B cell (primary cell): ENCODE measurements at regions of chr19 and their contacts with region 1.

Region 1: DNA sequence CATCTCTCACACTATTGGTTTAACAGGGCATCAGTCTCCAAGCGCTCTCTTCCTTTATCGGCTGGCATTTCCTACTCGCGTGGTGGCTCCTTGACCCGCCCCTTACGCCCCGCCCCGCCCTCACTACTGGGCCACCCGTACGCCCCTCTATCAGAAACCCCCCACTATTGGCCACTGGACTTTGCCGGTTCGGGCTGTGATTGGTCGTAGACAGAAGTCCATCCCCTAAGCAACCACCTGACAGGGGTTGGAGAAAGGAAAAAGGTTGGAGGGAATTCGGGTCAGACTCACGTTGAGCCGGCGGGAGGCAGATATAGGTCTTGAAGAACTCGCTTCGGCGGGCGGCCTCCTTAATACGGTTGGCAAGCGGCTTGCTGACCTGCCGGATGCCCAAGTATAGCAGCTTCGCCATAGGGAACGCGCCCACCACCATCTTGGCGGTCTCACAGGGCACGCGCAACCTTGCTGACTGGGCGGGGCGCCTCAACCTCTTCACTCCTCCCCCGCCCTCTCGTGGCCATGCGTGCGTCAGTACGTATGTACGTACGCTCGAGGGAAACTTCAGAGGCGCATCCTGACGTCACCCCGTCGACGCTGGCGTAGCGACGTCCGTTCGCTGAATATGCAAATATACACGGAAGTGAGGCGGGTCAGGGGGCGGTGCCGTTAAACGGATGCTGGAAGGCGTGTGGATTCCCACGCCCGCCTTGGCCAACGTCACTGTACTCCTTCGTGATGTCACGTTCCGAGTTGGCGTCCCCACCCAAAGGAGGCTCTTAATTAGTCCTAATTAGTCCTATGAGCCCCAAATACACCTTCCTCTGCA is at the start of gene OPA3:
- DNase-seq: peak; percentile 100
- ATAC-seq: peak; percentile 87
- H3K4me3 ChIP-seq: peak within 1 kb of the TSS; percentile 62 to 98 (median 82)
- H3K4me3 Mint-ChIP-seq: peak within 1 kb of the TSS; percentile 85
- H3K27ac ChIP-seq: peak within 1 kb of the TSS; percentile 97 to 98
- H3K27ac Mint-ChIP-seq: peak within 1 kb of the TSS; percentile 99
- H3K4me1 ChIP-seq: peaks cover 10 to 15% of the 10 kb centered on the region in 2 donors
- H3K4me1 Mint-ChIP-seq: peaks cover 21% of the 10 kb centered on the region
- H3K27me3 ChIP-seq: no peaks in the 10 kb centered on the region
- H3K27me3 Mint-ChIP-seq: peaks cover 5% of the 10 kb centered on the region
- CTCF ChIP-seq: no peak
- total RNA-seq, gene OPA3: 11.2 and 11.4 TPM in 2 replicates

Region 2: GRCh38 chr19:45496349-45496953 is 88.1 kb before region 1 on chr19:
- CTCF ChIA-PET with region 1: no interaction called
- POLR2A ChIA-PET with region 1: no interaction called
- intact Hi-C with region 1: loop called (anchors 1 kb)
- DNase-seq: peak; percentile 66
- ATAC-seq: peak; percentile 6
- H3K4me3 ChIP-seq: peak overlapping the region in 4 of 5 experiments; percentile 52 to 64 (median 60)
- H3K4me3 Mint-ChIP-seq: peak overlapping the region; percentile 73
- H3K27ac ChIP-seq: no peak overlapping the region
- H3K27ac Mint-ChIP-seq: no peak overlapping the region
- H3K4me1 ChIP-seq: peaks cover 43 to 51% of the 10 kb centered on the region in 2 donors
- H3K4me1 Mint-ChIP-seq: peaks cover 45% of the 10 kb centered on the region
- H3K27me3 ChIP-seq: peaks cover 0 to 49% (median 24%) of the 10 kb centered on the region in 4 experiments
- H3K27me3 Mint-ChIP-seq: peaks cover 21% of the 10 kb centered on the region
- CTCF ChIP-seq: no peak

Region 3: DNA sequence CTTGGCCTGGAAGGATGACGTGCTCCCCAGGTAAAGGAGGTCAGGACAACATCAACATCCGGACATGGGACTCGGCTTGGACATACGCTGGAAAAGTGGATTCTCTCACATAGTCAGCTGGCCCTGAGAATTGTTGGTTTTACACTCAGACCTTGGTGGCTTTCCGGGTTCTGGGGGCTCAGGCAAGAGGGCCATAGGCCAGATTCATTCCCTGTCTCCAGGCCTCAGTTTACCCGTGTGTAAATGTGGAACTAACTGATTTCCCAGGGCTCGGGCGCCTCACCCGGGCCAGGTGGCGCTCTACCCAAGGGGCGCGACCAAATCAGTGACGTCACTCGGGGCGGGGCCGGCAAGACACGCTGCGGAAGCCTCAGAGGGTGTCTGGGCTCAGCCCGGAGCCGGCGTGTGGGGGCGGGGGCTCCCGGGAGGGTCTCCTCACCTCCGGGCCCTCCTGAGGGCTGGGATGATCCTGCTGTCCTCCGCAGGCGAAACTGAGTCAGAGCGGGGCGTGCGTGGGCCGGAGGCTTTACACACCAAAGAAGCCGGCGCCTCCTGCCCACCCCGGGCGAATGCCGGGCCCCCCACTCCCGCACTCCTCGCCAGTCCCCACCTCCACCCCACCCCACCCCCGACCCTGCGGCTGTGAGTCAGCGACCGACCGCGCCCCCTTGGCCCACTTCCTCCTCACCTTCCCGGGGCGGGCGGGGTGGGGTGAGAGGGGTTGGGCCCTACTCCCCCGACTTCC is 78.1 kb before region 1 on chr19:
- CTCF ChIA-PET with region 1: interaction called, 6 read pairs
- POLR2A ChIA-PET with region 1: interaction called, 4 read pairs
- intact Hi-C with region 1: loop called (anchors 1 kb)
- DNase-seq: peak; percentile 98
- ATAC-seq: peak; percentile 74
- H3K4me3 ChIP-seq: peak overlapping the region; percentile 63 to 96 (median 84)
- H3K4me3 Mint-ChIP-seq: peak overlapping the region; percentile 94
- H3K27ac ChIP-seq: peak overlapping the region; percentile 83 to 87
- H3K27ac Mint-ChIP-seq: peak overlapping the region; percentile 94
- H3K4me1 ChIP-seq: peaks cover 26 to 43% of the 10 kb centered on the region in 2 donors
- H3K4me1 Mint-ChIP-seq: peaks cover 54% of the 10 kb centered on the region
- H3K27me3 ChIP-seq: no peaks in the 10 kb centered on the region
- H3K27me3 Mint-ChIP-seq: no peaks in the 10 kb centered on the region
- CTCF ChIP-seq: peak; percentile 63

Region 4: GRCh38 chr19:45674946-45675345 is 90.4 kb after region 1 on chr19:
- CTCF ChIA-PET with region 1: no interaction called
- POLR2A ChIA-PET with region 1: interaction called, 14 read pairs
- intact Hi-C with region 1: no loop called
- DNase-seq: no peak
- ATAC-seq: no peak
- H3K4me3 ChIP-seq: no peak overlapping the region
- H3K4me3 Mint-ChIP-seq: no peak overlapping the region
- H3K27ac ChIP-seq: no peak overlapping the region
- H3K27ac Mint-ChIP-seq: no peak overlapping the region
- H3K4me1 ChIP-seq: peaks cover 28 to 37% of the 10 kb centered on the region in 2 donors
- H3K4me1 Mint-ChIP-seq: peaks cover 25% of the 10 kb centered on the region
- H3K27me3 ChIP-seq: peaks cover 0 to 45% (median 17%) of the 10 kb centered on the region in 4 experiments
- H3K27me3 Mint-ChIP-seq: peaks cover 36% of the 10 kb centered on the region
- CTCF ChIP-seq: no peak

Region 5: GRCh38 chr19:45717166-45717982 is 132.8 kb after region 1 on chr19:
- CTCF ChIA-PET with region 1: interaction called, 3 read pairs
- POLR2A ChIA-PET with region 1: no interaction called
- intact Hi-C with region 1: loop called (anchors 1 kb)
- DNase-seq: peak; percentile 97
- ATAC-seq: peak; percentile 95
- H3K4me3 ChIP-seq: peak overlapping the region; percentile 76 to 93 (median 82)
- H3K4me3 Mint-ChIP-seq: peak overlapping the region; percentile 91
- H3K27ac ChIP-seq: peak overlapping the region; percentile 76 to 94
- H3K27ac Mint-ChIP-seq: peak overlapping the region; percentile 97
- H3K4me1 ChIP-seq: peaks cover 18 to 25% of the 10 kb centered on the region in 2 donors
- H3K4me1 Mint-ChIP-seq: peaks cover 39% of the 10 kb centered on the region
- H3K27me3 ChIP-seq: no peaks in the 10 kb centered on the region
- H3K27me3 Mint-ChIP-seq: no peaks in the 10 kb centered on the region
- CTCF ChIP-seq: no peak